A549 (cell line): ENCODE measurements at regions of chr1 and their contacts with region 1.

Region 1: GRCh38 chr1:204363335-204364124 is 3.8 kb upstream of the PLEKHA6 start:
- DNase-seq: peak; percentile 44 to 70
- ATAC-seq: peak; percentile 54 to 70; a peak in 4 of 6 replicates
- H3K4me3 ChIP-seq: no peak overlapping the region
- H3K27ac ChIP-seq: peak overlapping the region; percentile 48 to 71; a peak in 4 of 6 replicates
- H3K4me1 ChIP-seq: peaks cover 31% of the 10 kb centered on the region
- CTCF ChIP-seq: peak; percentile 98
- EP300 ChIP-seq: no peak
- POLR2A ChIP-seq: no peak
- RAD21 ChIP-seq: peak; percentile 98

Region 2: DNA sequence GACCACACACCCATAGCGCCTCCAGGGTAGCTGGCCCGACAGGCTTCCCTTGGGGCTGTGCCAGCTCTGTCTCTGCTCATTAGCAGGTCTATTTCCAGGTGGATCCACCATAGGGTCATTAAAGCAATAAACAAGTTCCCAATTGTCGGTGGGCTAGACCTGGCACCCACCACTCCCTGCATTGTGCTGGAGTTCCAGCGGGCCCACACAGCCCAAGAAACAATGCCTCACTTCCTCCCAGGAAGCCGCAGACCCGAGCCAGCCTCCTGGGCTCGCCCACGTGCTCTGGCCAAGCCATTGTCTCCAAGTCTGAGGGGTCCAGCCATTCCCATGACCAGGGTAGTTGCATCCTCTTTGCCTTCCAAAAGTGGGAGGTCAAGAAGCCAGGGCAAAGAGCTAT is 318.1 kb before region 1 on chr1:
- CTCF ChIA-PET with region 1: no interaction called
- POLR2A ChIA-PET with region 1: no interaction called
- DNase-seq: no peak
- ATAC-seq: no peak
- H3K4me3 ChIP-seq: no peak overlapping the region
- H3K27ac ChIP-seq: no peak overlapping the region
- H3K4me1 ChIP-seq: no peaks in the 10 kb centered on the region
- CTCF ChIP-seq: no peak
- EP300 ChIP-seq: no peak
- POLR2A ChIP-seq: no peak
- RAD21 ChIP-seq: no peak

Region 3: GRCh38 chr1:204190212-204191211 is 173.0 kb before region 1 on chr1:
- CTCF ChIA-PET with region 1: interaction called, 14 read pairs
- POLR2A ChIA-PET with region 1: no interaction called
- DNase-seq: no peak
- ATAC-seq: no peak
- H3K4me3 ChIP-seq: no peak overlapping the region
- H3K27ac ChIP-seq: no peak overlapping the region
- H3K4me1 ChIP-seq: peaks cover under 1% of the 10 kb centered on the region; the same call in 1 of the 3 replicates
- CTCF ChIP-seq: no peak
- EP300 ChIP-seq: no peak
- POLR2A ChIP-seq: no peak
- RAD21 ChIP-seq: no peak

Region 4: GRCh38 chr1:204225841-204226735 is 137.4 kb before region 1 on chr1:
- CTCF ChIA-PET with region 1: interaction called, 22 read pairs
- POLR2A ChIA-PET with region 1: no interaction called
- DNase-seq: no peak
- ATAC-seq: no peak
- H3K4me3 ChIP-seq: no peak overlapping the region
- H3K27ac ChIP-seq: no peak overlapping the region
- H3K4me1 ChIP-seq: no peaks in the 10 kb centered on the region
- CTCF ChIP-seq: no peak
- EP300 ChIP-seq: no peak
- POLR2A ChIP-seq: no peak
- RAD21 ChIP-seq: no peak

Region 5: DNA sequence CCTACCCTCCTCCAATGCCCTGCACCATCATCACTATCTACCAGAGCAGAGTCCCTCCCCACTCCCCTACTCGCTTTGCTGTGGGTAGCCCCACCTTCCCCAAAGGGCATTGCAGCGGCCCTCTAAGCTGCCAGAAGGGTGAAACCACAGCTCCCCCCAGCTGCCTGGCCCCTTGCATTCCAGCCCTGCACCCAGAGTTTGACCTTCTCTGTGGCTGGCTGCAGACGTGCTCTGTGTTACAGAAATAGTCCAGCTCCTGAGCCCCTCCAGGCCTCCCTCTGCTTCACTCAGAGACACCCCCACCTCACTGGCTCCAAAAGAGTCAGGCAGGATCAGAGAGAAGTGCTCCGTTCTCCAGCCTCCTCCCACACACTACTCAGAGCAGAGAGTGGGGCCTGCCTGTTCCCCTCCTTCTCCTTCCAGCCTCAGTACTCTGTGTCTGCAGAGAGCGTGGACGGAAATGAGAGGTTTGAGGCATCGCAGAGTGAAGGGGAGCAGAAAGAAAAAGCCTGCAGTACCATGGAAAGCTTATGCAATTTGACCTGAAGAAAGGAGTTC is 67.0 kb before region 1 on chr1:
- CTCF ChIA-PET with region 1: interaction called, 840 read pairs
- POLR2A ChIA-PET with region 1: no interaction called
- DNase-seq: no peak
- ATAC-seq: peak in 1 of 2 experiments; percentile 47; a peak in 3 of 6 replicates
- H3K4me3 ChIP-seq: no peak overlapping the region
- H3K27ac ChIP-seq: peak overlapping the region; percentile 35 to 78
- H3K4me1 ChIP-seq: peaks cover 42% of the 10 kb centered on the region
- CTCF ChIP-seq: no peak
- EP300 ChIP-seq: no peak
- POLR2A ChIP-seq: no peak
- RAD21 ChIP-seq: no peak; a peak in 1 of 5 replicates

Region 6: GRCh38 chr1:204341380-204341779 is 22.1 kb before region 1 on chr1:
- CTCF ChIA-PET with region 1: interaction called, 37 read pairs
- POLR2A ChIA-PET with region 1: no interaction called
- DNase-seq: no peak
- ATAC-seq: no peak
- H3K4me3 ChIP-seq: no peak overlapping the region
- H3K27ac ChIP-seq: no peak overlapping the region
- H3K4me1 ChIP-seq: peaks cover 31% of the 10 kb centered on the region
- CTCF ChIP-seq: no peak
- EP300 ChIP-seq: no peak
- POLR2A ChIP-seq: no peak
- RAD21 ChIP-seq: no peak

Region 7: GRCh38 chr1:204506961-204507387 is 143.4 kb after region 1 on chr1:
- CTCF ChIA-PET with region 1: interaction called, 38 read pairs
- POLR2A ChIA-PET with region 1: no interaction called
- DNase-seq: peak; percentile 35 to 93
- ATAC-seq: peak; percentile 79 to 87
- H3K4me3 ChIP-seq: peak overlapping the region; percentile 53
- H3K27ac ChIP-seq: peak overlapping the region; percentile 78 to 89
- H3K4me1 ChIP-seq: peaks cover 21% of the 10 kb centered on the region
- CTCF ChIP-seq: no peak
- EP300 ChIP-seq: no peak
- POLR2A ChIP-seq: no peak
- RAD21 ChIP-seq: no peak